ENCODE measurements at regions of chrX and their contacts with region 1.

Region 1: GRCh38 chrX:109886122-109886761 is 116.7 kb upstream of the TMEM164 start:
- DNase-seq: no peak

Region 2: DNA sequence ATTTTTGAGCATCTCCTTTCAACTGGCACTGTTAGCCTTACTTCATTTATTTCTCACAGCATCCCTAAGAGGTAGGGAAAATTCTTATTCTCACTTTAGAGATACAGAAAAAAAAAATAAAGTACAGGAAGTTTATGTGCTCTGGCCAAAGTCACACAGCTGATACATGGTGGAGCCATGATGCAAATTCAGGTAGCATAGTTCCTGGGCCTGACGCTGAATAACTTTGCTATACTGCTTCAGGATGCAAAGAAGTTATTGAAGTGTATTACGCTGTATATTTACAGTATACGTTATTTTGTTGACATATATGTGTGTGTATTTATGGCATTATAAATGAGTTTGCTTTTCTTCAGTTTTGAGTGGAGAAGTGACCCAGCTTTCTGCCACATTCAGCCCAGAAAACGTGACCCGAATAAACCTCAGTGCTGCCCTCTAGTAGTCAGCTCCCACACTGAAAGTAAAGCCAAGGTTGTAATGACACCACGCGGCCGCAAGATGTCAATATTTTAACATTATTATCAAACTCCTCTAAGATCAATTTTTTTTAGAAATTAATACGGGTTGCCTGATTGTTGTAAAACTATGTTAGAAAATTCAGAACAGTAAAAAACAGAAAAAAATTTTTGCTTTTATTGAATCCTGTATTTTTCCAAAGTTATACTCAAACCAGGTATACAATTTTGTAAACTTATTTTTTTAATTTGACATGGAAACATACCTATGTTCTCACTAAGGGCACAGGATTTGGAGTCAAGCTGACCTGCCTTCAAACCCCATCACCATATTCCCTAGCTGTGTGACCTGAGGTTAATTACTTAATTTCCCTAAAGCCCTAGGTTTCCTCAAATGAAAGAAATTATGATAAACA is 400.5 kb before region 1 on chrX:
- intact Hi-C with region 1: loop called (anchors 10 kb)
- DNase-seq: peak; percentile 78

Region 3: GRCh38 chrX:109714340-109714958 is 171.8 kb before region 1 on chrX:
- intact Hi-C with region 1: loop called (anchors 10 kb)
- DNase-seq: no peak

Region 4: GRCh38 chrX:109840585-109840984 is 45.7 kb before region 1 on chrX:
- intact Hi-C with region 1: no loop called
- DNase-seq: no peak

Region 5: DNA sequence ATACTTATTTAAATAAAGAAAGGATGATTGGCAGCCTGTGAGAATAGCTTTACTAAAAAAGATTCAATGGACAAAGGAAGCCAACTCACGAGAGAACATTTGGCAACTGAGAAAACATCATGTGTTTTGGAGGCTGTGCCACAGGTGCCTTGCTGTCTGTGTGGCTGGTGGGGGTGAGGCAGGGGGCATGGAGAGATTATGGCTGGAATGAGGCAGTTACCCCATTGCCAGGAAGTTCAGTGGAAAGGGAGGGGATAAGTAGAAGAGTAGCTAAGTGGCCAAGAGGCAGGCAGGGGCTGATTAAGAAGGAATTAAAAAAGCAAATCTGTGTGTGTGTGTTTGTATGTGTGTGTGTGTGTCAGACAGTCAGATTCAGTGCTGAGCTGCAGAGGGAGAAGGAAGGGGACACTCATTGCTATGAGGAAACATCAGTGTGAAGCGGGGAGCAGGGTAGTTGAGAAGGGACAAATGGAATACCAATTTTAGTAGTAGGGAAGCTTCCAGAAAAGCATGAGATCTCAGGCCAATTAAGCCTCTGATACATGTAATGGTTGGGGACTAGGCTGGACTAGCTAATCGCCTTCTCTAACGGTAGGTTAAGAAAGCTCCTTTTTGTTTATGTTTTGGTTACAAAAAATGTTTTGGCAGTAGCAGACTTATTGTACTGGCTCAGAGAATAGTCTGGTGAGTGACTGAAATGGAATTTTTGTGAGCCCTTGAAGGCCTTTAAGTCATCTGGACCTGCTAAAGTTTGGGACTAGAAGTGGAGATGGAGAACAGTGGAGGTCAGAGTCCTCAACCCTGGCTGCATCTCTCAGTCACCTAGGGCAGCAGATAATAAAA is 135.2 kb after region 1 on chrX:
- intact Hi-C with region 1: no loop called
- DNase-seq: no peak